CD4-positive, alpha-beta memory T cell (primary cell): ENCODE measurements at regions of chr2 and their contacts with region 1.

Region 1: DNA sequence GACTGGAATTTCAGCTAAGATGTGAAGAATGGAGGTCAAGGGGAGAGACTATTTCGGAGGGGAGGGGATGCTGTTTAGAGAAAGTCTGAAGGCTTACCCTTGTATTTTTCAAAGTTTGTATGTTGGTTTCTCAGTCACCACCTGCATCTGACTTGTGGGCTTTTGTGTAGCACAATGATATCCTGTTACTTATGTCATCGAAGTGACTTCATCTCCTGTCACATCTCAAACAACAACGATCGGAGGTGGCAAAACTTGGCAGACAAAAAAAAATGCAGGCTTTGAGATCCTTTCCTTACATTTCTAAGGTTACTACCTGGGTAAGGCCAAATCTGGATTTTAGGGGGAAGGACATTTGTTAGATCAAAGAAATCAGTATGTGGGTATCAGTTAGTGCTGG is 11.7 kb upstream of the CXCR4 start:
- DNase-seq: peak; percentile 83 to 87 (median 85)
- H3K4me3 ChIP-seq: no peak overlapping the region
- H3K4me3 Mint-ChIP-seq: peak overlapping the region; percentile 63 to 87 (median 76)
- H3K27ac ChIP-seq: peak overlapping the region; percentile 95
- H3K27ac Mint-ChIP-seq: peak overlapping the region; percentile 96 to 100 (median 99)
- H3K4me1 ChIP-seq: peaks cover 100% of the 10 kb centered on the region
- H3K4me1 Mint-ChIP-seq: peaks cover 71 to 99% (median 87%) of the 10 kb centered on the region in 4 donors
- H3K27me3 ChIP-seq: no peaks in the 10 kb centered on the region
- H3K27me3 Mint-ChIP-seq: no peaks in the 10 kb centered on the region

Region 2: DNA sequence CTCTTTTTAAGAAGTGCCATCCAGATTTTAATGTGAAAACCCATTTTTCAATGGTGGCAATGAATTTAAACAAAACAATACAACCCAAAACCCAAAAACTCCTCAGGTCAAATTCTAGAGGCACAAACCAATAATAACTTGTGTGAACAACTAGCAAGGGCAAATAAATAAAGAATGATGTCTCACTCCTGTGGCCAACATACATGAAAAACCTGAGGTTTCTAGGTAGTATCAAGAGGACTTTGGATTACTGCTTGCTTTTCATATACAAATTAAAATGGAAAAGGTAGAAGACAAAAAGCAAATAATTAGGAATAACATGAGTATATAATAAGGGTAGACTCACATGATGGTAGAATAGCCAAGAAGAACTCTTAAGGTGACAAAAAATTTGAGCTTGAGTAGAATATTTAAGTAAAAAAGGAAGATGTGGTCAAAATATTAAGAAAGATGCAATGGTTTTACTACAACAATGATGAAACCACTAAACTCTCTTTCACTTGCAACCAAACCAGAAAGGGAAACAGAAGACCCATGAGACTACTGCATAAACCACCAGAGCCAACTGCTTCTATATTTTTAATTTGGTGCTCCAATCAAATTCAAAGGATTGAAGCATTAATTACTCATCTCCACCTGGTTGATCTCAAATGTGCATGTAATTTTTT is 197.7 kb before region 1 on chr2:
- CTCF ChIA-PET with region 1: no interaction called
- POLR2A ChIA-PET with region 1: no interaction called
- intact Hi-C with region 1: no loop called
- DNase-seq: no peak
- H3K4me3 ChIP-seq: no peak overlapping the region
- H3K4me3 Mint-ChIP-seq: no peak overlapping the region
- H3K27ac ChIP-seq: no peak overlapping the region
- H3K27ac Mint-ChIP-seq: peak overlapping the region in 1 of 7 donors; percentile 46
- H3K4me1 ChIP-seq: no peaks in the 10 kb centered on the region
- H3K4me1 Mint-ChIP-seq: peaks cover 4 to 10% (median 8%) of the 10 kb centered on the region in 4 donors
- H3K27me3 ChIP-seq: no peaks in the 10 kb centered on the region
- H3K27me3 Mint-ChIP-seq: no peaks in the 10 kb centered on the region

Region 3: DNA sequence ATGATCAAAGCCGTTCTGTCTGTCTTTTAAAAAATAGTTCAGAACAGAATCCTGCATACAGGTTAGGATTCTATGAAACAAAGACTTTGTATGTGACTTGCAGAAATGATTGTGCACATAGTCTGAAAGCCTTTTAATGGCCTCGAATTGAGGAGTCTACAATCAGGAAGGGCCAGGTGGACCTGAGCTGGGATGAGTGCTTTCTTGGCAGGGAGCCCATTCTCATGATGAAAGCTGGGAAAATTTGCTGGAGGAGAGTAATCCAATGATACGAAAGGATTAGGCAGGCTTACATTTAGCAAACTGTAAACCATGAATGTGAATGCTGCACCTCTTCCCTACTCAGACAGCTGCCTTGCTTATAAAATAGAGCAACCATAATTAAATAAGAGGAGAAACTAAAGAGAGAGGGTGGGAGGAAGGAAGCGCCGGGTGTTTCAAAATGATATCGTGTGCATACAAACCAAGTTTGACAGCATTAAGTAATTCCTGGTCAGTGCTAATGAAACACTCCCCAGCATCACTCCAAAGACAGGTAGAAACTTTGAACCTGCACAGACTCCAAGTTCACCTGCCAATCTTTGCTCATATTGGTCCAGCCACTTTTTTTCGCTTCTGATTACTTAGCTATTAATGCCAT is 12.0 kb after region 1 on chr2:
- CTCF ChIA-PET with region 1: interaction called, 9 read pairs
- POLR2A ChIA-PET with region 1: interaction called, 94 read pairs
- intact Hi-C with region 1: loop called (anchors 1 kb)
- DNase-seq: no peak
- H3K4me3 ChIP-seq: no peak overlapping the region
- H3K4me3 Mint-ChIP-seq: peak overlapping the region in 3 of 8 donors; percentile 10 to 53 (median 17)
- H3K27ac ChIP-seq: no peak overlapping the region
- H3K27ac Mint-ChIP-seq: peak overlapping the region in 6 of 7 donors; percentile 22 to 99 (median 80)
- H3K4me1 ChIP-seq: peaks cover 59% of the 10 kb centered on the region
- H3K4me1 Mint-ChIP-seq: peaks cover 45 to 69% (median 52%) of the 10 kb centered on the region in 4 donors
- H3K27me3 ChIP-seq: no peaks in the 10 kb centered on the region
- H3K27me3 Mint-ChIP-seq: no peaks in the 10 kb centered on the region

Region 4: DNA sequence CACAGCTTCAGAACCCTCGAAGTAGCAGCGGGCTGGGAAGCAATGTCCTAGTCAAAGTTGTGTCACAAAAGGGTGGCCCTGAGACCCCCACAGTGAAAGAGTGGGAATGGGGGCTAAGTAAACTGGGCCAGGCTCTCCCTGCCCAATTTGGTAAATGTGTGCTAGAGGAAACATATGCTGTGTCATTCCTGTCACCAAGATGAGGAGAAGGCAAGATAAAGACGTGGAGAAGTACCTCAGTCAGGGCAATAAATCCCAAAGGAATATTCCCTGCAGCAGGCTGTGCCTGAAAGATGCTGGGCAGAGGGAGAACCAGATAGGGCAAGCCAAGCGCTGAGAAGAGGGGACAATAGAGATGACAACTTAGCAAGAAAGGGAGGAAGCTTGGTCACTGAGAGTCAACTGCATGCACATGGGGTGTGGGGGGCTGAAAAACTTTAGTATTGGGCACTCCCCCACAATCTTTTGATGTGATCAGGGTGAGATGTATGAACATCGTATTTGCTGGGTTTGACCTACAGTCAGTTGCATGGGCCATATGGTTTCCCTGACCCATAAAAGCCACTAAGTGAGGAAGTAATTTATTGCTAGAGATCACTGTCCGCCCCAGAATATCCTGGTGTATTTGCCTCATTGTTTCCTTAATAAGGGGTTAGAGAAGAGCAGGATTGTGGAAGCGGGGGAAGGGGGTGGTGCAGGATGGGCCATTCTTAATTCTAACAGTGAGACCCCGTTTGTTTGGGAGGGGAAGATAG is 38.3 kb after region 1 on chr2:
- CTCF ChIA-PET with region 1: no interaction called
- POLR2A ChIA-PET with region 1: no interaction called
- intact Hi-C with region 1: no loop called
- DNase-seq: no peak
- H3K4me3 ChIP-seq: no peak overlapping the region
- H3K4me3 Mint-ChIP-seq: peak overlapping the region in 1 of 8 donors; percentile 8
- H3K27ac ChIP-seq: no peak overlapping the region
- H3K27ac Mint-ChIP-seq: peak overlapping the region in 1 of 7 donors; percentile 59
- H3K4me1 ChIP-seq: peaks cover 8% of the 10 kb centered on the region
- H3K4me1 Mint-ChIP-seq: peaks cover 8 to 34% (median 8%) of the 10 kb centered on the region in 4 donors
- H3K27me3 ChIP-seq: no peaks in the 10 kb centered on the region
- H3K27me3 Mint-ChIP-seq: no peaks in the 10 kb centered on the region

Region 5: GRCh38 chr2:136212423-136213378 is 83.1 kb after region 1 on chr2:
- CTCF ChIA-PET with region 1: no interaction called
- POLR2A ChIA-PET with region 1: interaction called, 36 read pairs
- intact Hi-C with region 1: no loop called
- DNase-seq: peak; percentile 53 to 70 (median 59)
- H3K4me3 ChIP-seq: no peak overlapping the region
- H3K4me3 Mint-ChIP-seq: peak overlapping the region in 7 of 8 donors; percentile 3 to 76 (median 45)
- H3K27ac ChIP-seq: peak overlapping the region; percentile 39
- H3K27ac Mint-ChIP-seq: peak overlapping the region; percentile 73 to 96 (median 90)
- H3K4me1 ChIP-seq: peaks cover 31% of the 10 kb centered on the region
- H3K4me1 Mint-ChIP-seq: peaks cover 25 to 66% (median 35%) of the 10 kb centered on the region in 4 donors
- H3K27me3 ChIP-seq: no peaks in the 10 kb centered on the region
- H3K27me3 Mint-ChIP-seq: no peaks in the 10 kb centered on the region

Region 6: GRCh38 chr2:136344339-136344738 is 214.7 kb after region 1 on chr2:
- CTCF ChIA-PET with region 1: no interaction called
- POLR2A ChIA-PET with region 1: no interaction called
- intact Hi-C with region 1: no loop called
- DNase-seq: no peak
- H3K4me3 ChIP-seq: no peak overlapping the region
- H3K4me3 Mint-ChIP-seq: no peak overlapping the region
- H3K27ac ChIP-seq: no peak overlapping the region
- H3K27ac Mint-ChIP-seq: no peak overlapping the region
- H3K4me1 ChIP-seq: no peaks in the 10 kb centered on the region
- H3K4me1 Mint-ChIP-seq: no peaks in the 10 kb centered on the region
- H3K27me3 ChIP-seq: no peaks in the 10 kb centered on the region
- H3K27me3 Mint-ChIP-seq: no peaks in the 10 kb centered on the region

Region 7: DNA sequence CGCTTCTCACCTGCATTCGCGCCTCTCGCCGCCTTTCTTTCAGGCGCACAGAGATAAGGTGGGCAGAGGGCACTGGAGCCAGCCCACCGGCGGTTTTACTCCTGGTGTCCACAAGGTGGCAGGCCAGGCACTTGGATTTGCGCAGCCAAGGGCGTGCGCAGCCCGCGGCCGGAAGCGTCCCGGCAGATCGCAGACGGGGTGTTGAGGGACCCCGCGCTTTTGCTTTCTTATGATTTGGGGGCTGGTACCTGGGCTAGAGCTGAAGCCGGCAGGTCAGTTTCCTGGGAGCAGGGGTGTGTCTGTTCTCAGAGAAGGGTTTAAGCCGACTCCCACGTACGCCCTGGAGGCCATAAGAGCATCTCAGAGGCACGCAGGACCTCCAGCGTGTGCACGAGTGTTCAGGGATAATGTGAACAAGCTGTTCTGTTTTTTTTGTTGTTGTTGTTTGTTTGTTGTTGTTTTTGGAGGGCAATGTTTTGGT is 294.0 kb after region 1 on chr2:
- CTCF ChIA-PET with region 1: no interaction called
- POLR2A ChIA-PET with region 1: no interaction called
- intact Hi-C with region 1: no loop called
- DNase-seq: peak; percentile 65 to 72 (median 71)
- H3K4me3 ChIP-seq: peak overlapping the region; percentile 53 to 59
- H3K4me3 Mint-ChIP-seq: peak overlapping the region; percentile 77 to 90 (median 84)
- H3K27ac ChIP-seq: no peak overlapping the region
- H3K27ac Mint-ChIP-seq: peak overlapping the region in 6 of 7 donors; percentile 4 to 87 (median 68)
- H3K4me1 ChIP-seq: peaks cover 17% of the 10 kb centered on the region
- H3K4me1 Mint-ChIP-seq: peaks cover 11 to 21% (median 14%) of the 10 kb centered on the region in 4 donors
- H3K27me3 ChIP-seq: peaks cover 9% of the 10 kb centered on the region
- H3K27me3 Mint-ChIP-seq: peaks cover 18 to 23% of the 10 kb centered on the region in 2 donors